ENCODE measurements at regions of chr11 and their contacts with region 1.

Region 1: DNA sequence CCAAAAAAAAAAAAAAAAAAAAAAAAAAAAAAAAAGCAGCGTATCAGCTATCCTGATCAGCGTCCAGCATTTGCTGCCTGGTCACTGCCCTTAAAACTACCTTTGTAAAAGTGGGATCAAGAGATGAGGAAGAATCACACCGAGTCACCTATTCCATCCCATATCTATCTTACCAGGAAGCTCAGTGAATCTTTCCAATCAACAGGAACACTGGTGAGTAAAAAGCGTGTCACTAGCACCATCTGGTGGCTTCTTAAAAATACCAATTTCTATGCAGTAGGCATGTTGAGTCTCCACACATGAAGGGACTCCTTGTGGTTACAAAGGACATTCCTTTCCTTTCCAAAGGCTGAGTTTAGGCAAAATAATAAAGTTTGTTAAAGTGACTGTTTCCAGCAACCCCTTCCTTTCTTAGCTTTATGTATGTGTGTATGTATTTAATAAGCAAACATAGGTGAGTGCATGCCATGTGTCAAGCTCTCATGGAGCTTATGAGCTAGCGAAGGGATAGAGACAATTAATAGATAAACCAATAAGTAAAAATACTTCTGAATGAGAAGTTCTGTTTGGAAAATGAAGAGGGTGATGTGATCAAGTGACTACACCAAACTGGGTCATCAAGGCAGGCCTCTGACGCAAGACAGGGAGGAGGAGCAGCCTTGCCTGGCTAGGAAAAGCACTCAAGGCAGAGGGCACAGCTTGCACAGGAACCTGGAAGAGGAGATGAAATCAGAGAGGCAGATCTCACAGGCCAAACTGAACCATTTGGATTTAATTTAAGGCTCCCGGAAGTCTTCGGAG is 13.9 kb upstream of the TP53AIP1 start:
- DNase-seq: peak in 4 of 14 experiments; percentile 31 to 67 (median 60)
- ATAC-seq: no peak
- H3K4me3 ChIP-seq: no peak overlapping the region
- H3K4me3 Mint-ChIP-seq: no peak overlapping the region
- H3K27ac ChIP-seq: no peak overlapping the region
- H3K27ac Mint-ChIP-seq: no peak overlapping the region
- H3K4me1 ChIP-seq: peaks cover 2% of the 10 kb centered on the region
- H3K4me1 Mint-ChIP-seq: peaks cover 4% of the 10 kb centered on the region
- H3K27me3 ChIP-seq: peaks cover 0 to 7% of the 10 kb centered on the region in 2 experiments
- H3K27me3 Mint-ChIP-seq: peaks cover 5% of the 10 kb centered on the region
- CTCF ChIP-seq: peak; percentile 75

Region 2: DNA sequence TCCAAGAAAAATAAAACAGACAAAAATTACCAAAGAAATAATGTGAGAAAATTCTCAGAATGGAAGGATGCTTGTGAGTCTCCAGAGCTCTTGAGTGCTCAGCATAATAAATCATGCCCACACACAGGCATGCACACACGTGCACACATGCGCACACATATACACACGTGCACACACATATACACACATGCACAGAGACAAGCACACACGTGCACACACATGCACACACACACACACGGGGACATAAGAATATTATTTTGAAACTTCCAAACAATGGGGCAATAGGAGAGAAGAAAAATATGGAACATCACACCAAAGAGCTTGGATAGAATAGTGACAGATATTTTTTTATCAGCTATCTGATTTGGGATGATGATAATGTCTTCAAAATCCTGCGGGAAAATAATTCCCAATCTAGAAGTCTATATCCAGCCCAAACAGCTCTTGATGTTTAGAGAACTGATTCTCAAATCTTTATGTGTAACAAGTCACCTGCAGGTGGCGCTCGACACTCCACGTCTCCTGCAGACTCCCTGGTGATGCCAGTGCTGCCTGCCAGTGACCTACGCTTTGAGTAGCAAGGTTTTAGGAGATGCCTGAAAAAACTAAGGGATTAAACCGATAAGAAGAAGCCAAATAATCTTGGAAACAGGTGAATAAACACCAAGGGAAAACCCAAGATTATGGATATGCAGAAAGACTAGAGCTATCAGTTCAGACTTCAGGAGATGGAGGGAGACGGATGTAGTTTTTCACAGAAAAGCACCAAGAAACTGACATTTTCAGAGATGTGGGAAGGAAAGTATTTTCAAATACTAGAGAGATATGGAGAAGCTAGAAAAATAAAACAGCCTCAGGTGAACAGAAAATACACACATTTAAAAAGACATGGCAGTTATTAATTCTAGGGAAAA is 1112.9 kb before region 1 on chr11:
- CTCF ChIA-PET with region 1: no interaction called
- POLR2A ChIA-PET with region 1: no interaction called
- intact Hi-C with region 1: loop called in 1 of 2 experiments (anchors 10 kb)
- DNase-seq: peak; percentile 22 to 60 (median 36)
- ATAC-seq: no peak
- H3K4me3 ChIP-seq: no peak overlapping the region
- H3K4me3 Mint-ChIP-seq: no peak overlapping the region
- H3K27ac ChIP-seq: no peak overlapping the region
- H3K27ac Mint-ChIP-seq: no peak overlapping the region
- H3K4me1 ChIP-seq: no peaks in the 10 kb centered on the region
- H3K4me1 Mint-ChIP-seq: no peaks in the 10 kb centered on the region
- H3K27me3 ChIP-seq: no peaks in the 10 kb centered on the region
- H3K27me3 Mint-ChIP-seq: peaks cover 12% of the 10 kb centered on the region
- CTCF ChIP-seq: peak; percentile 56

Region 3: DNA sequence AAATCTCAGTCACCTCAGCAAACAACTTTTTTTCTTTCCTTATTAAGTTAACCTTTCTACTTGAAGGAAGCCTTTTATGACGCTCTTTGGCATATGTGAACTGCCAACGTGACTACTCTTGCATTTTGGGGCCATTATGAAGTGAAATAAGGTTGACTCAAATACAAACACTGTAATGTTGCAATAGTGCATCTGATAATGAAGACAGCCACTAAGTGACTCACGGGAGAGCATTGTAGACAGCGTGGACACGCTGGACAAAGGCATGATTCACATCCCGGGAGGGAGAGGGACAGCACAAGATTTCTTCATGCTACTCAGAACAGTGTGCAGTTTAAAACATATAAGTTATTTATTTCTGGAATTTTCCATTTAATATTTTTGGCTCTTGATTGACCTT is 930.0 kb before region 1 on chr11:
- CTCF ChIA-PET with region 1: no interaction called
- POLR2A ChIA-PET with region 1: no interaction called
- intact Hi-C with region 1: loop called (anchors 2 to 5 kb)
- DNase-seq: peak in 1 of 14 experiments; percentile 41
- ATAC-seq: no peak
- H3K4me3 ChIP-seq: no peak overlapping the region
- H3K4me3 Mint-ChIP-seq: no peak overlapping the region
- H3K27ac ChIP-seq: no peak overlapping the region
- H3K27ac Mint-ChIP-seq: no peak overlapping the region
- H3K4me1 ChIP-seq: peaks cover under 1% of the 10 kb centered on the region
- H3K4me1 Mint-ChIP-seq: peaks cover 4% of the 10 kb centered on the region
- H3K27me3 ChIP-seq: peaks cover 0 to 3% of the 10 kb centered on the region in 2 experiments
- H3K27me3 Mint-ChIP-seq: peaks cover 3% of the 10 kb centered on the region
- CTCF ChIP-seq: no peak

Region 4: GRCh38 chr11:128157423-128158298 is 798.9 kb before region 1 on chr11:
- CTCF ChIA-PET with region 1: no interaction called
- POLR2A ChIA-PET with region 1: interaction called, 3 read pairs
- intact Hi-C with region 1: loop called (anchors 5 kb)
- DNase-seq: peak in 13 of 14 experiments; percentile 9 to 84 (median 41)
- ATAC-seq: peak; percentile 94
- H3K4me3 ChIP-seq: peak overlapping the region; percentile 37
- H3K4me3 Mint-ChIP-seq: peak overlapping the region; percentile 87
- H3K27ac ChIP-seq: no peak overlapping the region
- H3K27ac Mint-ChIP-seq: peak overlapping the region; percentile 24
- H3K4me1 ChIP-seq: no peaks in the 10 kb centered on the region
- H3K4me1 Mint-ChIP-seq: peaks cover 8% of the 10 kb centered on the region
- H3K27me3 ChIP-seq: no peaks in the 10 kb centered on the region
- H3K27me3 Mint-ChIP-seq: no peaks in the 10 kb centered on the region
- CTCF ChIP-seq: peak; percentile 100

Region 5: GRCh38 chr11:128172046-128172878 is 784.3 kb before region 1 on chr11:
- CTCF ChIA-PET with region 1: no interaction called
- POLR2A ChIA-PET with region 1: no interaction called
- intact Hi-C with region 1: loop called (anchors 1 to 5 kb)
- DNase-seq: peak; percentile 73 to 92 (median 84)
- ATAC-seq: peak; percentile 83
- H3K4me3 ChIP-seq: no peak overlapping the region
- H3K4me3 Mint-ChIP-seq: no peak overlapping the region
- H3K27ac ChIP-seq: no peak overlapping the region
- H3K27ac Mint-ChIP-seq: no peak overlapping the region
- H3K4me1 ChIP-seq: no peaks in the 10 kb centered on the region
- H3K4me1 Mint-ChIP-seq: peaks cover 6% of the 10 kb centered on the region
- H3K27me3 ChIP-seq: no peaks in the 10 kb centered on the region
- H3K27me3 Mint-ChIP-seq: no peaks in the 10 kb centered on the region
- CTCF ChIP-seq: peak; percentile 91

Region 6: DNA sequence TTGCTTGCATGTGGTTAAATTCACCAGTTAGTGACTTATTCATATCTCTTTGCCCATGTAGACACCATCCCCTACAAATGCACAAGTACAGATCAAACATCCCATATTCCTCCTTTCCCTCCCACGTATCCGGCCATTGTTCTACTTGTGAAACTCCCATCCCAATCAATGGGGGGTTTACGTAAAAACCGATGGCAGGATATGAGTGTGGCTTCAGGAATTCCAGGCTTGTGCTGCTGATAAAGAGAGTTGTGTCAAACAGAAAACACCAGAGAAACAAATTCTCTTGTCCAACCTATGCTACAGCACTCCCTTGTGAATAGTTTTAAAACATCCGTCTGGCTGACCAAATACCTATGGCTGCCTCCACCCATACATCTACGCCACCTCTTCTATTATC is 247.2 kb before region 1 on chr11:
- CTCF ChIA-PET with region 1: no interaction called
- POLR2A ChIA-PET with region 1: no interaction called
- intact Hi-C with region 1: no loop called
- DNase-seq: no peak
- ATAC-seq: no peak
- H3K4me3 ChIP-seq: no peak overlapping the region
- H3K4me3 Mint-ChIP-seq: peak overlapping the region; percentile 13
- H3K27ac ChIP-seq: no peak overlapping the region
- H3K27ac Mint-ChIP-seq: peak overlapping the region; percentile 81
- H3K4me1 ChIP-seq: peaks cover 69% of the 10 kb centered on the region
- H3K4me1 Mint-ChIP-seq: peaks cover 99% of the 10 kb centered on the region
- H3K27me3 ChIP-seq: no peaks in the 10 kb centered on the region
- H3K27me3 Mint-ChIP-seq: no peaks in the 10 kb centered on the region
- CTCF ChIP-seq: no peak

Region 7: DNA sequence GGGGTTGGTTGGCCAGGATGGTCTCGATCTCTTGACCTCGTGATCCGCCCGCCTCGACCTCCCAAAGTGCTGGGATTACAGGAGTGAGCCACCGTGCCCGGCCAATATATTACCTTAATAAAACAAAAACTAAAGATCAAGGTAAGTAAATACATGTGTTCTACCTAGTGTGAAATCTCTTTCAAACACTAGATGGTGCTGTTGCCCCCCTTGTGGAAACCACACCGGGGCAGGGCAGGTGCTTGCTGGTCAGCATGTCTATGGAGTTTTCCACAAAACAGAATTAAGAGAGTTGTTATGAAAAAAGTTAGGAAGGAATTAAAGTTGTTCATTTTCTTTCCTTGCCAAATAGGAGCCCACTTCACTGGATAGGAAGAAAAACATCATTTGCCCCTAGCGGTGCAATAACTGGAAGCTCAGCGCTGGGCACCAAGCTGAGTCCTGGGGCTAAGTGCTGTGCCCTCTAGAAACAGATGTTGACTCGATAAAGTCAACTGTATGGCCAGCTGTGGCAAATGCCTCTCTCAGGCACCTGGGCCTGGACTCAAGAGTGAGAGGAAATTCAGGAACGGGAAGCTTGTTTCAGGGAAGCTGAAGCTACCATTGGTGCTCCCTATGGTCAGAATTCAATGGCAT is 71.8 kb before region 1 on chr11:
- CTCF ChIA-PET with region 1: interaction called, 8 read pairs
- POLR2A ChIA-PET with region 1: interaction called, 4 read pairs
- intact Hi-C with region 1: loop called (anchors 1 kb)
- DNase-seq: peak; percentile 27 to 80 (median 40)
- ATAC-seq: peak; percentile 81
- H3K4me3 ChIP-seq: no peak overlapping the region
- H3K4me3 Mint-ChIP-seq: no peak overlapping the region
- H3K27ac ChIP-seq: no peak overlapping the region
- H3K27ac Mint-ChIP-seq: no peak overlapping the region
- H3K4me1 ChIP-seq: no peaks in the 10 kb centered on the region
- H3K4me1 Mint-ChIP-seq: peaks cover 4% of the 10 kb centered on the region
- H3K27me3 ChIP-seq: peaks cover 32 to 50% of the 10 kb centered on the region in 2 experiments
- H3K27me3 Mint-ChIP-seq: peaks cover 81% of the 10 kb centered on the region
- CTCF ChIP-seq: peak; percentile 80

Measured in CD4-positive, alpha-beta T cell (primary cell).